ENCODE measurements at regions of chr18 and their contacts with region 1.

Region 1: GRCh38 chr18:35029770-35030169 is 11.4 kb upstream of the MAPRE2 start:
- DNase-seq: no peak
- H3K4me3 Mint-ChIP-seq: peak overlapping the region; percentile 65
- H3K27ac Mint-ChIP-seq: peak overlapping the region; percentile 97
- H3K4me1 Mint-ChIP-seq: peaks cover 54% of the 10 kb centered on the region
- H3K27me3 Mint-ChIP-seq: no peaks in the 10 kb centered on the region

Region 2: DNA sequence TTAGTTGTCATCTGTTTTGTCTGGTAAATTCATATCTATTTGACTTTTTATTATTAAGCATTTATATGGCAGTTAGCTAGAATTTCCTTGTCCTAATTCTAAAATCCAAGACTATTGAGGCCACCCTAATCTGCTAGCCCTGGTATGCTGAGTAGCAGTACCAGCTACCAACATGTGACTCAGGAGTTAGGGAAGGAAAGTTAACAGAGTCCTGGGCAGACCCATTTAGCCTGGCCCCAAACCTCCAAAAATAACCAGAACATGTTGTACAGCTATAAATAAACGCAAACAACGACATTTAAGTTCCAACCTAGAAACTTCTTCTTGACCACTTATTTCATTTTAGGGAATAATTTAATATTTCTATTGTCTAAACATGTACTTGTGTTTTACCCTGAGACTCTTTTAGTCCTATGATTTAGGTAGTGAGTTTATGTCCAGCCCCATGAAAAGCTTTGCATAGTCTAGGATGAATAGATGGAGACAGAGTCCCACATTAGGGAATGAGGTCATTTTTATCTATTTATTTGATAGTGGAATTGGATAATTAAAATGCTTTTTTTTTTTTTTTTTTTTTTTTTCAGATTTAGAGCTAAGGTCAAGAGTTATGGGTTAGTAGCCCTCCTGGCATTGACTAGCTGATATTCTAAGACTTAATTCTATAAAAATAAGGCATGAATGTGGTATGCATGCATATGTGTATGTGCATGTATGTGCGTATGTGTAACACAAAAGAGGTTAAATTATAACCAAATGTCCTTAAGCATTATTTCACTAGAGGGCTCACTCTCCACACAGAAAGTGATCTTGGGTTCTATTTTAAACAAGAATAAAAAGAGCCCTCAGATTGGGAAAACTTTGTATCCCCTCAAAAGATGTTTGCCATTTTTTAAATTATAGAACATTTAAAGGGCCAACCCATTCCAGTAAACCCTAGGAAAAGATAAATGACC is 148.6 kb before region 1 on chr18:
- CTCF ChIA-PET with region 1: no interaction called
- DNase-seq: no peak
- H3K4me3 Mint-ChIP-seq: no peak overlapping the region
- H3K27ac Mint-ChIP-seq: no peak overlapping the region
- H3K4me1 Mint-ChIP-seq: no peaks in the 10 kb centered on the region
- H3K27me3 Mint-ChIP-seq: peaks cover 4% of the 10 kb centered on the region

Region 3: GRCh38 chr18:35040988-35041814 is 11.4 kb after region 1 on chr18 and contains the start of gene MAPRE2:
- CTCF ChIA-PET with region 1: interaction called, 53 read pairs
- DNase-seq: peak; percentile 99
- H3K4me3 Mint-ChIP-seq: peak within 1 kb of the TSS; percentile 93
- H3K27ac Mint-ChIP-seq: peak within 1 kb of the TSS; percentile 92
- H3K4me1 Mint-ChIP-seq: peaks cover 50% of the 10 kb centered on the region
- H3K27me3 Mint-ChIP-seq: peaks cover 5% of the 10 kb centered on the region

Region 4: DNA sequence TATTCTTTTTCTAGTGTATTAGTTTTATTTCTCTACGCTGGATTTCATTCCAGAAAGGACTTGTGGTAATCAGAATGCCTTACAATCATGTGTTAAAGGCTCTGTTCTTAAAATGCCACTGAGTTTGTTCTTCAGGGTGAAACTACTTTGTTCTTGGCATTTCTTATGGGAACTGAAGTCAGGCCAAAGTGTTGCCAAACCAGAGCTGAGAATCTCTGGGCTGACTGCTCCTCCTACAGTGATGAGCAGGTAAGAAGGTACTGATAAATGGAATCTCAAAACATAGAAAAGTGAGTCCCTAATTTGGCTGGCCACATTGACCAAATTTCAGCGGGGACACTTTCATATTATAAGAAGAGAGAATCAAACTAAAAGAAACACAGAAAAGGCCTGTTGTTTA is 156.0 kb after region 1 on chr18:
- CTCF ChIA-PET with region 1: interaction called, 18 read pairs
- DNase-seq: no peak
- H3K4me3 Mint-ChIP-seq: no peak overlapping the region
- H3K27ac Mint-ChIP-seq: no peak overlapping the region
- H3K4me1 Mint-ChIP-seq: no peaks in the 10 kb centered on the region
- H3K27me3 Mint-ChIP-seq: peaks cover 7% of the 10 kb centered on the region

Region 5: DNA sequence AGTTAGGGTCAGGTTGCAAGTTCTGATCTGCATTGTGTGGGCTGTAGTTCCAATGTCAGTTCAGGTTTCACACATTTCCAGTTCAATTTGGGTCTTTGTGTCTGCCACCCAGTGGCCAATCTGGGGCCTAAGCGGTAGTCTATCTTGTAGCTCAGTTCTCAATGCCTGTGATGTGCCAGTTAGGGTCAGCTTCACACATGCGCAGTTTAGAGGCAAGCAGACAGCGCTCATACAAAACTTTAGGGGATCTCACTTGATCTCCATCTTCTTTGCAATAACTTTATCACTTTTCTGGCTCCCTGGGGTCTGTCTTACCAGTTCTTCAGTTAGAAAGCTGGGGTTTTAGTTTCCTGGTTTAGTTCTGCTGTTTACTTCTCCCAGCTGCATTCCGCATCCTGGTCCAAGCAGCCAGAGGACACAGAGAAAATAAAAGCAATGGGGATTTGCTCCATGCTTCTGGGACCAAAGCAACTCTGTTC is 325.4 kb after region 1 on chr18:
- CTCF ChIA-PET with region 1: interaction called, 13 read pairs
- DNase-seq: peak; percentile 69
- H3K4me3 Mint-ChIP-seq: no peak overlapping the region
- H3K27ac Mint-ChIP-seq: no peak overlapping the region
- H3K4me1 Mint-ChIP-seq: no peaks in the 10 kb centered on the region
- H3K27me3 Mint-ChIP-seq: no peaks in the 10 kb centered on the region